ENCODE measurements at regions of chr6 and their contacts with region 1.

Region 1: GRCh38 chr6:98880486-98880885 is 46.1 kb downstream of the POU3F2 start:
- DNase-seq: no peak
- ATAC-seq: no peak
- H3K4me3 ChIP-seq: no peak overlapping the region
- H3K4me3 Mint-ChIP-seq: no peak overlapping the region
- H3K27ac ChIP-seq: no peak overlapping the region
- H3K27ac Mint-ChIP-seq: no peak overlapping the region
- H3K4me1 ChIP-seq: no peaks in the 10 kb centered on the region
- H3K4me1 Mint-ChIP-seq: peaks cover 0 to 7% (median 5%) of the 10 kb centered on the region in 3 donors
- H3K27me3 ChIP-seq: no peaks in the 10 kb centered on the region
- H3K27me3 Mint-ChIP-seq: no peaks in the 10 kb centered on the region

Region 2: DNA sequence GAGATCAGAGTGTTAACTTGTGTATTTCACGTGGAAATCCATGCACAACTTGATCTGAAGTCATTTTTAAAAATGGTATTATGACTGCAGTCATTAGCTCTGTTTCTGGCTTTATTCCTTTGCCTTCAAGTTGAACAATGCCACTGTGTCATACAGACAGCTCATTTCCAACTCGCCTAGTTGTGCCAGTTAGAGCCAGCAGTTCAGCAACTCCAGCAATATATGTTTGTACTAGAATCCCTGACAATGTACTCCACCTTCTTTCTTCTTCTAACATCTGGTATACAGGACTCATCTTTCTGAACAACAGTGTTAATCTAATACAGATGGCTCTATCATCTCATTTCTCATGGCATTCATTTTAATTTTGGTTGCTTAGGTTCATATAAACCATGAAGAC is 464.5 kb before region 1 on chr6:
- CTCF ChIA-PET with region 1: no interaction called
- POLR2A ChIA-PET with region 1: interaction called in 1 of 2 experiments, 13 read pairs
- DNase-seq: no peak
- ATAC-seq: no peak
- H3K4me3 ChIP-seq: no peak overlapping the region
- H3K4me3 Mint-ChIP-seq: no peak overlapping the region
- H3K27ac ChIP-seq: no peak overlapping the region
- H3K27ac Mint-ChIP-seq: no peak overlapping the region
- H3K4me1 ChIP-seq: no peaks in the 10 kb centered on the region
- H3K4me1 Mint-ChIP-seq: no peaks in the 10 kb centered on the region
- H3K27me3 ChIP-seq: no peaks in the 10 kb centered on the region
- H3K27me3 Mint-ChIP-seq: no peaks in the 10 kb centered on the region

Region 3: DNA sequence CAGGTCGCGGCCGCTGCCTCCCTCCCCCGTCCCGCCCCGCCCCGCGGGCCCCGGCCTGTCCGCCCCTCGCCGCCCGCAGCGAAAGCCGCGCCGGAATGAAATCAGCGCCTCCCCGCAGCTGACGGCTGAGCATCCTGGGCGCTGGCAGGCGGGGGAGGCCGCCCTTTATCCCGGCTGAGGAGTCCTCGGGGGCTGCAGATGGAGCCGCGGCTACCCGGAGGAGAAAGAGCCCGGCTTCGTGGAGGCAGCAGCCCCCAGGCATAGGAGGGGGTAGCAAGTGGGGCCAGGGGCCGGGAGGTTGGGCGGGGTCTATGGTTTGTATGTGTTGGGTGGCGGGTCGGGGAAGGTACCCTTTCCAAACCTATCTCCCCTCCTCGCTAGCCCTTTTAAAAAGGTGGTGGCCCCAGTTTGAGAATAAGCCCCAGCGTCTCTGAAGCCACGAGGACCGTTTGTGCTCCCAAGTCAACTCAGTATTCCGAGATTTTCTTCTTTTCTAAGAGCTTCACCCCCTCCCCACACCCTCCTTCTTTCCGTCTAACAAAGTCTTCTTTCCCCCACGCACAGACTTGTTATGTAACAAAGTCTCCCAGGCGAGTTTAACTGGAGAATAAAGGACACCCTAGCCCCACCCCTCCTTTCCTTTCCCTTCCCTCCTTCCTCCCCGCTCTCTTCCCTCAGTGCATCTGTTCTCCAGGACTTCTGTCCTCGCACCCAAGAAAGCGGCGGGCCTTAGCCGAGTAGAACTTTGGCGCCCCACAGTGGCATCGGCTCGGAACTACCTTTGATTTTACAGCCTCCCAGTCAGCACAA is 35.1 kb before region 1 on chr6:
- CTCF ChIA-PET with region 1: no interaction called
- POLR2A ChIA-PET with region 1: no interaction called
- DNase-seq: peak in 30 of 35 experiments; percentile 29 to 76 (median 56)
- ATAC-seq: peak; percentile 54 to 75 (median 59)
- H3K4me3 ChIP-seq: peak overlapping the region in 1 of 2 donors; percentile 51
- H3K4me3 Mint-ChIP-seq: peak overlapping the region; percentile 43 to 69 (median 65)
- H3K27ac ChIP-seq: no peak overlapping the region
- H3K27ac Mint-ChIP-seq: peak overlapping the region in 1 of 2 donors; percentile 85
- H3K4me1 ChIP-seq: peaks cover 6 to 40% of the 10 kb centered on the region in 2 experiments
- H3K4me1 Mint-ChIP-seq: peaks cover 30 to 34% (median 34%) of the 10 kb centered on the region in 3 donors
- H3K27me3 ChIP-seq: peaks cover 40 to 72% of the 10 kb centered on the region in 2 experiments
- H3K27me3 Mint-ChIP-seq: peaks cover 80 to 85% of the 10 kb centered on the region in 2 donors

Region 4: DNA sequence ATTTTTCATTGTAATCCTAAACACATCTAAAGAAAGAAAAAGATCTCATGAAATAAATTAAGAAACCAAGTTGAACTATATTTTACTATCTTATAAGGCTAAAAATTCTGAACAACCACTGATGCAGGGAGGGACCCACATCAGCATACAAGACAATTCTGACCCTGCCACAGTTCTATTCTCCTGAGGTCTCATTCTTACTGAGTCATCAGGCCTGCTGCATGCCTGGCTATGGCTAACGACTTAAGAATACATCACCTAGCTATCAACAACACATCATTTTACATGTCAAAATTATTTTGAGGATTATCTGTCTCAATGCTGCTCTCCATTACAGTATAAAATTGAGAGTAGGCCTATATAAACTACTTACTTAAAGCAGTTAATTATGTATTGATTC is 14.3 kb after region 1 on chr6:
- CTCF ChIA-PET with region 1: interaction called in 1 of 2 experiments, 10 read pairs
- POLR2A ChIA-PET with region 1: no interaction called
- DNase-seq: no peak
- ATAC-seq: no peak
- H3K4me3 ChIP-seq: no peak overlapping the region
- H3K4me3 Mint-ChIP-seq: no peak overlapping the region
- H3K27ac ChIP-seq: no peak overlapping the region
- H3K27ac Mint-ChIP-seq: no peak overlapping the region
- H3K4me1 ChIP-seq: no peaks in the 10 kb centered on the region
- H3K4me1 Mint-ChIP-seq: peaks cover 0 to 3% (median 0%) of the 10 kb centered on the region in 3 donors
- H3K27me3 ChIP-seq: no peaks in the 10 kb centered on the region
- H3K27me3 Mint-ChIP-seq: no peaks in the 10 kb centered on the region

Measured in T-cell (primary cell).